ENCODE measurements at regions of chr6 and their contacts with region 1.

Region 1: GRCh38 chr6:167141667-167142432 is 15.9 kb downstream of the GPR31 start:
- DNase-seq: peak; percentile 54
- ATAC-seq: peak; percentile 90
- H3K4me3 Mint-ChIP-seq: no peak overlapping the region
- H3K27ac Mint-ChIP-seq: no peak overlapping the region
- H3K4me1 Mint-ChIP-seq: peaks cover 16% of the 10 kb centered on the region
- H3K27me3 Mint-ChIP-seq: peaks cover 9% of the 10 kb centered on the region

Region 2: GRCh38 chr6:166786704-166787293 is 355.1 kb before region 1 on chr6:
- CTCF ChIA-PET with region 1: interaction called, 11 read pairs
- POLR2A ChIA-PET with region 1: no interaction called
- DNase-seq: peak; percentile 32
- ATAC-seq: no peak
- H3K4me3 Mint-ChIP-seq: no peak overlapping the region
- H3K27ac Mint-ChIP-seq: no peak overlapping the region
- H3K4me1 Mint-ChIP-seq: no peaks in the 10 kb centered on the region
- H3K27me3 Mint-ChIP-seq: peaks cover 7% of the 10 kb centered on the region

Region 3: DNA sequence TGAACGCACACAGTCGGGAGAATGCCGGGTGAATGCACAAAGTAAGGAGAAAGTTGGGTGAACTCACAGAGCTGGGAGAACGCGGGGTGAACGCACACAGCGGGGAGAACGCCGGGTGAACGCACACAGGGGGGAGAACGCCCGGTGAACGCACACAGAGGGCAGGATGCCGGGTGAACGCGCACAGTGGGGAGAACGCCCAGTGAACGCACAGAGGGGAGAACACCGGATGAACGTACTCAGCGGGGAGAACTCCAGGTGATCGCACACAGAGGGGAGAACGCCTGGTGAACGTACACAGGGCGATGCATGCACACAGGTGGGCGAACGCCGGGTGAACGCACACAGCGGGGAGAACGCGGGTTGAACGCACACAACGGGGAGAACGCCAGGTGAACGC is 242.9 kb before region 1 on chr6:
- CTCF ChIA-PET with region 1: no interaction called
- POLR2A ChIA-PET with region 1: no interaction called
- DNase-seq: no peak
- ATAC-seq: no peak
- H3K4me3 Mint-ChIP-seq: no peak overlapping the region
- H3K27ac Mint-ChIP-seq: no peak overlapping the region
- H3K4me1 Mint-ChIP-seq: no peaks in the 10 kb centered on the region
- H3K27me3 Mint-ChIP-seq: no peaks in the 10 kb centered on the region

Region 4: GRCh38 chr6:167200806-167201205 is 59.0 kb after region 1 on chr6:
- CTCF ChIA-PET with region 1: no interaction called
- POLR2A ChIA-PET with region 1: no interaction called
- DNase-seq: no peak
- ATAC-seq: no peak
- H3K4me3 Mint-ChIP-seq: no peak overlapping the region
- H3K27ac Mint-ChIP-seq: no peak overlapping the region
- H3K4me1 Mint-ChIP-seq: no peaks in the 10 kb centered on the region
- H3K27me3 Mint-ChIP-seq: peaks cover 24% of the 10 kb centered on the region

Measured in activated CD8-positive, alpha-beta T cell treated with anti-CD3 and anti-CD28 coated beads, Interleukin-2, amount 10 ng/mL, durations not matched to agents 7 days and 5 days (primary cell).